GM10248 (cell line): ENCODE measurements at regions of chr15 and their contacts with region 1.

Region 1: DNA sequence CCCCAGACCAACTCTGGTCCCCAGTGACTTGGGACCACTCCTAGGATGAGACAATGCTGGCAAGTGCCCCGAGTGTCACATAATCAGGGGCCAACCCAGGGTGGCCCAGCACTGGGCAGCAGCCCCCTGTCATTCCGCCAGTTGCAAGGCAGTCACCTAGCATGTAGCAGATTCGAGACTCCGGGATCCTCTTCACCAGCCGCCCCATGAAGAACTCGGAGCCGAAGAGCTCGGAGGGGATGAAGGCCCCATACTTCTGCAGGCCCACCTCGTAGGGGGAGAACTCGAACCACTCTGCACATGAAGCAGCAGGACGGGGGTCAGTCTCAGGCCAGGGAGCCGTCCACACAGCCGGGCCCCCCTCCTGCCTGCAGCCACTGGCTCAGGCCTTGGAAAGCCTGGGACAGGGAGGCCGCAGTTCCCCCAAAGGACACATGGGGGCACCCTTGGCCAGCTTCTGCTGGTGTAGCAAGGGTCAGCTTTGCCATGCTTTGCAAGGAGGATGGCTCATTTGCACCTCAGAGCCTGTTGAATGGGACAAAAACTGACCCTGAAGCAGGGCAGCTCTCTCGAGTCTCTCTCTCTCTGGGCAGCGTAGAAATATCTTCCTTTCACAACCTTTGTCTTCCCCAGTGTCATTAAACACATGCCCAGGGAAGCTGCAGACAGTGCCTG is 17.0 kb upstream of the EHD4 start:
- DNase-seq: peak; percentile 90
- CTCF ChIP-seq: peak; percentile 99

Region 2: GRCh38 chr15:41972253-41973242 is 16.8 kb before region 1 on chr15 and contains the start of gene EHD4:
- CTCF ChIA-PET with region 1: interaction called, 39 read pairs
- POLR2A ChIA-PET with region 1: no interaction called
- DNase-seq: peak; percentile 96
- CTCF ChIP-seq: peak; percentile 47

Region 3: GRCh38 chr15:42010434-42010833 is 21.0 kb after region 1 on chr15:
- CTCF ChIA-PET with region 1: interaction called, 46 read pairs
- POLR2A ChIA-PET with region 1: no interaction called
- DNase-seq: peak; percentile 67
- CTCF ChIP-seq: no peak

Region 4: GRCh38 chr15:42056934-42057779 is 67.8 kb after region 1 on chr15:
- CTCF ChIA-PET with region 1: interaction called, 102 read pairs
- POLR2A ChIA-PET with region 1: no interaction called
- DNase-seq: peak; percentile 82
- CTCF ChIP-seq: peak; percentile 71

Region 5: DNA sequence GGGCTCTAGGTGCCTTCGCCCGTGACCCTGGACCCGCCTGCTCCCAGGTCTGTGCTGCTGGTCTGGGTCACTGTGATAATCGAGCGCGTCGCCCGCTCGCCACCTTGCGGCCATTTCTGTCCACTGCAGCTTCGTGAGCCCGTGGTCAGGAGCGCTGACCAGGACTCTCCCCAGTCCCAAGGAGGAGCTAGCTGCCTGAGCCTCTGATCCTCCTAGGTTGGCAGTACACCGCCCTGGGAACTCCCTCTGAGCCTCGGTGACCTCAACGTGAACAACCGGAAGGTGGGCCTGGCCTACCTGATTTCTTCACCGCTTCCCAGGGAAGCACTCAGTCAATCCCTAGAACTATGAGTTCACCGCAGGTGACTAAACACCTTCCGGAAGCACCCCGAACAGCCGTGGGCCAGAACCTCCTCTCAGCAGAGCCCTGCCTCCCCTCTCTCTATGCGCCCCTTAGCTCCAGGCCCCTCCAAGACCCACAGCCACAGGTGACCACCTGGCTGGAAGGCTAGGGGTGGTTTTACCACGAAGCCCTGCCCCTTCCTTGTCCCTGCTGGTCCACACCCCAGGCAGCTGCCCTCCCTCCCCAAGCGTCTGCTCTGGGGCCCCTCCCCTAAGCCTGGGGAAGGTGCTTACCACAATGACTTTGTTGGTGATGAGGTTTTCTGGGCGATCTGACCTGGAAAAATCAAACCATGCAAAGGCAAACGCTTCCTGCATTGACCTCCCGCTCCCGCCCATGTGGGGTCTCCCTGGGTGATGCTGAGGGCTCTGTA is 95.3 kb after region 1 on chr15:
- CTCF ChIA-PET with region 1: interaction called, 133 read pairs
- POLR2A ChIA-PET with region 1: no interaction called
- DNase-seq: peak; percentile 80
- CTCF ChIP-seq: peak; percentile 97

Region 6: DNA sequence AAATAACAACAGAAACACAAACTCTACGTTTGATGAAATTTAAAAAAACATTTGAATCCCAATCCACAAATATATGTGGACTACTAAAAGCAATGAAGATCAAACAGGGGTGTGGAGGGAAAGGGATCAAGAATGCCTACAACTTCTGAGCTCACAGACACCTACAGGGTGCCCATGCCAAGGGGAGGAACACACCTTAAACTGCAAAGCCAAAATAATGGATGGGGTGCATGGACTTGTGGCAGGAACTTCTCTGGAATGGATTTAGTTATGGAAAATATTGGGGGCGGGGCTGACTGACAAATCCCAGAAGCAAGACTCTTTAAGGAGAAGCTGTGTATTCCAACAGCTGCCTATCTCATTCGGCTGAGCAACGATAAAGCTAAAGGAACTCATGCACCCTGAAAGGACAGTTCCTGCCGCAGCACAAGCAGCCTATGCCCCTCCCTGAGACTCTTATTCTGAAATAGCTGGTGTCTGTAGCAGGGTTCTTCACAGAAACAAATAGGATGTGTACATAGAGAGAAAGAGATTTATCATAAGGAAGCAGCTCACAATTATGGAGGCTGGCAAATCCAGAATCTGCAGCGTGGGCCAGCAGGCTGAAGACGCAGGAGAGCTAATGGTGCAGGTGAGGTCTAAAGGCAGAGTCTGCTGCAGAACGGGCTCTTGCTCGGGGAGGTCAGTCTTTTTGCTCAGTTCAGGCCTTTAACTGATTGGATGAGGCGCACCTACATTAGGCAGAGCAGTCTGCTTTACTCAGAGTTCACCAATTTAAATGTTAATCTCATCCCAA is 129.5 kb after region 1 on chr15:
- CTCF ChIA-PET with region 1: no interaction called
- POLR2A ChIA-PET with region 1: no interaction called
- DNase-seq: no peak
- CTCF ChIP-seq: no peak

Region 7: GRCh38 chr15:42240814-42241213 is 251.4 kb after region 1 on chr15:
- CTCF ChIA-PET with region 1: no interaction called
- POLR2A ChIA-PET with region 1: no interaction called
- DNase-seq: no peak
- CTCF ChIP-seq: no peak

Region 8: GRCh38 chr15:42608110-42608531 is 618.7 kb after region 1 on chr15:
- CTCF ChIA-PET with region 1: no interaction called
- POLR2A ChIA-PET with region 1: no interaction called
- DNase-seq: no peak
- CTCF ChIP-seq: no peak